Ovary (tissue), 10 donors: ENCODE measurements at regions of chr14 and their contacts with region 1.

Region 1: GRCh38 chr14:77314043-77314442 is 6.6 kb downstream of the POMT2 start:
- DNase-seq: no peak
- H3K4me3 ChIP-seq: no peak overlapping the region
- H3K27ac ChIP-seq: no peak overlapping the region
- H3K4me1 ChIP-seq: peaks cover 9% of the 10 kb centered on the region
- H3K27me3 ChIP-seq: no peaks in the 10 kb centered on the region
- CTCF ChIP-seq: no peak
- EP300 ChIP-seq: no peak
- POLR2A ChIP-seq: no peak

Region 2: DNA sequence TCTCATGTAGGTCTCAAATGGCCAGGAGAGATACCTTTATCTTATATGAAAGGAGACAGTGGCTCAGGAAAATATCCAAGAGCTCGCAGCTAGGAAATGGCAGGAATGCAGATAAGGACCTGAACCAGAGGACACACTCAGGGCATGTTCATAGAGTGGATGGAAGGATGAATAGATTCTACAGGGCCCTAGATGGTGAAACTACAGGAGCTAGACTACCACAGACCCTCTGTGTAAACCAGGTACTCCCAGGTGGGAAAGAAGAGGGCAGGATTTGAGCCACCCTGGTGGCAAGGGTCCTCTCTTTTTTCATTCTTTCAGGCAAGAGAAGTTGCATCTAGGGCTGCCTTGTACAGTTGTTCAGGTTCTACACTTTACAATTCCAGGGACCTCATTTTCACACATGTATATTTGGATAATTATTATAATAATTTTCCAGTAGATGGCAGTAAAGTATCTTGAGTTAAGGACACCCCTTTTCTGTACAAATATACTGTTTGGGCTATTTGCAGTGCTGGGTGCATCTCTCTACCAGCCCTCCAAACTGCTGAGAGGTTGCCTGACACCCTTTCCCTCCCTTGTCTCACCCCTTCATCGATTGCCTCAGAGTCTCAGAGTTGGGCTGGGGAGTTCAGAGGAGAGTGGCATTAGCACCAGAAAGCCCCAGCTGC is 162.0 kb before region 1 on chr14:
- intact Hi-C with region 1: loop called in 1 of 4 experiments (anchors 10 kb)
- DNase-seq: no peak
- H3K4me3 ChIP-seq: no peak overlapping the region
- H3K27ac ChIP-seq: no peak overlapping the region
- H3K4me1 ChIP-seq: no peaks in the 10 kb centered on the region
- H3K27me3 ChIP-seq: no peaks in the 10 kb centered on the region
- CTCF ChIP-seq: no peak
- EP300 ChIP-seq: no peak
- POLR2A ChIP-seq: no peak

Region 3: GRCh38 chr14:77253333-77254190 is 60.5 kb before region 1 on chr14:
- intact Hi-C with region 1: no loop called
- DNase-seq: no peak
- H3K4me3 ChIP-seq: no peak overlapping the region
- H3K27ac ChIP-seq: no peak overlapping the region
- H3K4me1 ChIP-seq: no peaks in the 10 kb centered on the region
- H3K27me3 ChIP-seq: no peaks in the 10 kb centered on the region
- CTCF ChIP-seq: no peak
- EP300 ChIP-seq: no peak
- POLR2A ChIP-seq: no peak

Region 4: DNA sequence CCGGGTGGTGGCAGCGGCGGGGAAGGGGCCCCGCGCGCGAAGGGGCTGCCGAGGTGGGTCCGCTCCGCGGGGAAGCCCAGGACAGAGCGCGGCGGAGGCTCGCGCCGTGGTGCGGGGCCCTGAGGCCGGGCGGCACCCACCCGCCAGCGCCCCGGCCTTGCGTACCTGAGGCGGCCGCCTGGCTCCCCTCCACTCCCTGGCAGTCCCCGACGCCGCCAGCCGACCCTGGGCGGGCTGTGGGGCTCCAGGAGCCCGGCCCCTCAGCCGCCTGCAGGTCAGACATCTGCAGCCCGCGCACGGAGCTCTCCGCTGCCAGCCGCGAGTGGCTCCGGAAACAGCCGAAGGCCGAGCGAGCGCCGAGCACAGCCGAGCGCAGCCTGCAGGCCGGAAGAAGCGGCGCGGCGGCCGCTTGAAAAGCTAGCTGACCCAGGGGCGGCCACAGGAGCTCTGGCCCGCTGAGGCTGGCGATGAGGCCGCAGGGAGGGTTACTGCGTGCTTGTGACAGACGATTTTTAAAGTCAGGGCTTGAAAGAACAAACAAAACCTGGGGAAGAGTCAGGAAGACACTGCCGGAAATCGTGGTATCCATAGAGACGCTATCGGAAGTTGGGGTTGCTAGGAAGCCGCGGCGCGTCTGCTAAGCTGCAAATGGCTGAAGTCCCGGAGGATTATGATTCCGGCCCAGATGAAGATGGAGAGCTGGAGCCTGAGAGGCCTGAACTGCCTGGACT is 62.9 kb after region 1 on chr14 and contains the starts of genes SAMD15 and TMED8:
- intact Hi-C with region 1: no loop called
- DNase-seq: peak; percentile 75 to 91 (median 84)
- H3K4me3 ChIP-seq: peak within 1 kb of the TSS; percentile 91
- H3K27ac ChIP-seq: peak within 1 kb of the TSS; percentile 60 to 83
- H3K4me1 ChIP-seq: peaks cover 5% of the 10 kb centered on the region
- H3K27me3 ChIP-seq: no peaks in the 10 kb centered on the region
- CTCF ChIP-seq: peak in 2 of 3 donors; percentile 20 to 22
- EP300 ChIP-seq: no peak
- POLR2A ChIP-seq: no peak
- total RNA-seq, gene SAMD15: 0.12 to 3.2 (median 1.4) TPM
- total RNA-seq, gene TMED8: 10.0 to 17.4 (median 14.5) TPM

Region 5: GRCh38 chr14:77738559-77739250 is 424.7 kb after region 1 on chr14:
- intact Hi-C with region 1: no loop called
- DNase-seq: peak in 1 of 5 donors; percentile 42
- H3K4me3 ChIP-seq: no peak overlapping the region
- H3K27ac ChIP-seq: no peak overlapping the region
- H3K4me1 ChIP-seq: no peaks in the 10 kb centered on the region
- H3K27me3 ChIP-seq: no peaks in the 10 kb centered on the region
- CTCF ChIP-seq: no peak
- EP300 ChIP-seq: no peak
- POLR2A ChIP-seq: no peak